Activated CD4-positive, alpha-beta T cell treated with anti-CD3 and anti-CD28 coated beads for 36 hours (primary cell): ENCODE measurements at regions of chr3 and their contacts with region 1.

Region 1: GRCh38 chr3:72482589-72483321 is 365.5 kb downstream of the SHQ1 start:
- DNase-seq: peak; percentile 94
- ATAC-seq: peak; percentile 46
- H3K4me3 Mint-ChIP-seq: peak overlapping the region; percentile 51
- H3K27ac Mint-ChIP-seq: peak overlapping the region; percentile 90
- H3K4me1 Mint-ChIP-seq: peaks cover 73% of the 10 kb centered on the region
- H3K27me3 Mint-ChIP-seq: no peaks in the 10 kb centered on the region

Region 2: DNA sequence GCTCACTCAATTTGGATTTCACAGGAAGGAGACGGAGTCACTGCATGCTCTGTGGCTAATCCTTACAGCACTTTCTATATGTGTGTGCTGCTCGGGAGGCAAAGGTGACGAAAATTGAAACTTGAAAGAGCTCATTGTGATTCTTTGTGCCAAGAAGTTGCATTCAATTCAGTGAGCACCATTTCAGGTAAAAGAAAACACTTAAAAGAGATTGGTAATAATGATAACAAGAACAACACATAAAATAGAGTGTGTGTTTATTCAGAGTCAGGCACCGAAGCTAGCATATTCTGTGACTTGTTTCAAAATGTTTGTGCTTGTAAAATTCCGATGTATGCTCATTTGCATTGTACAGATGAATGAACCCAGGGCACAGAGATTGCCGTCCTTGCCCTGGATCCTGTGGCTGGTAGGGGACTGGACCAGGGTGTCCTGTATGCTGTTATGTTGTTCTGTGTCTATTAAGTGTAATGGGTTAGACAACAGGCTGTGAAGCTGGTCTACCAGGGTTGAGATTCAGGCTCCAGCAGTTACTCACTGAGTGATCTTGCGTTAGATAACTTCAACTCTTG is 504.5 kb before region 1 on chr3:
- CTCF ChIA-PET with region 1: no interaction called
- POLR2A ChIA-PET with region 1: interaction called, 3 read pairs
- intact Hi-C with region 1: loop called (anchors 2 to 5 kb)
- DNase-seq: peak; percentile 67
- ATAC-seq: peak; percentile 87
- H3K4me3 Mint-ChIP-seq: peak overlapping the region; percentile 44
- H3K27ac Mint-ChIP-seq: peak overlapping the region; percentile 81
- H3K4me1 Mint-ChIP-seq: peaks cover 47% of the 10 kb centered on the region
- H3K27me3 Mint-ChIP-seq: peaks cover 13% of the 10 kb centered on the region

Region 3: DNA sequence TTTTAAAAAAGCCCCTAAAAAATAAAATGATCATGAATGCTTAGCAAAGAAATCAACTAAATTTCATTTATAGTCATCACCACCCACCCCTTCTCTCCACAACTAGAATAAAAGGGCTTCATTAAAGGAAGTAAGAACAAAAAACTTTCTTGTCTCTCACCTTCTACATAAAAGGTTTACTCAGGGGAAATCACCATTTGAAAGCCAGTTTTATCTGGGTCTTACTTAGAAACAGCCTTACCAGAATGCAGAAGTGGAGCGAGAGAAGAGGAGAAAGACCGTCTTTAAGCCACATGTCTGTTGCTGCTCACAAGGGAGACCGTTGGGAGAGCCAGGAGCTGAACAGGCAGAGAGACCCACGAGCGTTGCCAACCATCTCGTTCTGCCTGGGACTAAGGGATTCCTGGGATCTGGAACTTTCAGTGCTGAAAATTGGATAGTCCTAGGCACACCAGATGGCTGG is 347.7 kb before region 1 on chr3:
- CTCF ChIA-PET with region 1: no interaction called
- POLR2A ChIA-PET with region 1: no interaction called
- intact Hi-C with region 1: loop called in 1 of 2 experiments (anchors 5 kb)
- DNase-seq: peak; percentile 16
- ATAC-seq: peak; percentile 62
- H3K4me3 Mint-ChIP-seq: peak overlapping the region; percentile 54
- H3K27ac Mint-ChIP-seq: peak overlapping the region; percentile 85
- H3K4me1 Mint-ChIP-seq: peaks cover 48% of the 10 kb centered on the region
- H3K27me3 Mint-ChIP-seq: peaks cover 2% of the 10 kb centered on the region

Region 4: DNA sequence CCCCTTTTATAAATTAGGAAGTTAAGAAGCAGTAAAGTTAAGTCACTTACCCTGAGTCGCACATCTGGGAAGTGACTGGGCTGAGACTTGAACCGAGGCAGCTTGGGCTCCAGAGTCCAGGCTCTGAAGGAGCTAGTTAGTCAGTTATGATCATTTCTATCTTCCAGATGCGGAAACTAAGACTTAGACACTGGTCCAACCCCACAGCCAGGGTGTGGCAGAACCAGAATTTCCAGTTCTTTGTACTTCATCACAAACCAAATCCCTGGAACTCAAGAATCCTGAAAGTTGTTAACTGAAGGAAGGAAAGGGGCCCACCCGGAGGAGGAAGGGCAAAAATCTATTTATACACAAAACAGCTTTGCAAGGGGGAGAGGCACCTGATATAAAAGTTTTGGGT is 24.4 kb before region 1 on chr3:
- CTCF ChIA-PET with region 1: interaction called, 5 read pairs
- POLR2A ChIA-PET with region 1: no interaction called
- intact Hi-C with region 1: loop called in 1 of 2 experiments (anchors 1 kb)
- DNase-seq: no peak
- ATAC-seq: no peak
- H3K4me3 Mint-ChIP-seq: no peak overlapping the region
- H3K27ac Mint-ChIP-seq: no peak overlapping the region
- H3K4me1 Mint-ChIP-seq: peaks cover 24% of the 10 kb centered on the region
- H3K27me3 Mint-ChIP-seq: peaks cover 15% of the 10 kb centered on the region

Region 5: GRCh38 chr3:72629191-72629631 is 146.5 kb after region 1 on chr3:
- CTCF ChIA-PET with region 1: no interaction called
- POLR2A ChIA-PET with region 1: interaction called, 3 read pairs
- intact Hi-C with region 1: loop called (anchors 1 to 5 kb)
- DNase-seq: no peak
- ATAC-seq: peak; percentile 67
- H3K4me3 Mint-ChIP-seq: no peak overlapping the region
- H3K27ac Mint-ChIP-seq: peak overlapping the region; percentile 79
- H3K4me1 Mint-ChIP-seq: peaks cover 60% of the 10 kb centered on the region
- H3K27me3 Mint-ChIP-seq: no peaks in the 10 kb centered on the region